GM12878 (cell line): ENCODE measurements at regions of chr21 and their contacts with region 1.

Region 1: GRCh38 chr21:46458315-46459023 is at the start of gene DIP2A:
- DNase-seq: peak; percentile 85
- ATAC-seq: peak; percentile 97
- H3K4me3 ChIP-seq: peak within 1 kb of the TSS; percentile 87
- H3K27ac ChIP-seq: peak within 1 kb of the TSS; percentile 95
- H3K4me1 ChIP-seq: no peaks in the 10 kb centered on the region
- H3K27me3 ChIP-seq: no peaks in the 10 kb centered on the region
- CTCF ChIP-seq: peak in 2 of 3 experiments; percentile 9; a peak in 1 of 6 replicates
- EP300 ChIP-seq: no peak
- POLR2A ChIP-seq: peak; percentile 96
- RAD21 ChIP-seq: no peak
- polyA plus RNA-seq, gene DIP2A: 1.7 to 3.4 TPM

Region 2: GRCh38 chr21:46442938-46443337 is 15.5 kb before region 1 on chr21:
- CTCF ChIA-PET with region 1: no interaction called
- POLR2A ChIA-PET with region 1: no interaction called
- RAD21 ChIA-PET with region 1: no interaction called
- SMC1A ChIA-PET with region 1: no interaction called
- in situ Hi-C with region 1: no loop called
- intact Hi-C with region 1: no loop called
- DNase-seq: no peak
- ATAC-seq: no peak
- H3K4me3 ChIP-seq: no peak overlapping the region
- H3K27ac ChIP-seq: no peak overlapping the region
- H3K4me1 ChIP-seq: no peaks in the 10 kb centered on the region
- H3K27me3 ChIP-seq: no peaks in the 10 kb centered on the region
- CTCF ChIP-seq: no peak
- EP300 ChIP-seq: no peak
- POLR2A ChIP-seq: no peak
- RAD21 ChIP-seq: no peak

Region 3: GRCh38 chr21:46472246-46472645 is 13.8 kb after region 1 on chr21:
- CTCF ChIA-PET with region 1: interaction called, 4 read pairs
- POLR2A ChIA-PET with region 1: interaction called, 3 read pairs
- RAD21 ChIA-PET with region 1: no interaction called
- SMC1A ChIA-PET with region 1: interaction called, 16 read pairs
- in situ Hi-C with region 1: no loop called
- intact Hi-C with region 1: no loop called
- DNase-seq: no peak
- ATAC-seq: no peak
- H3K4me3 ChIP-seq: no peak overlapping the region
- H3K27ac ChIP-seq: no peak overlapping the region
- H3K4me1 ChIP-seq: no peaks in the 10 kb centered on the region; the same call in none of the 2 replicates
- H3K27me3 ChIP-seq: no peaks in the 10 kb centered on the region
- CTCF ChIP-seq: no peak
- EP300 ChIP-seq: no peak
- POLR2A ChIP-seq: no peak
- RAD21 ChIP-seq: no peak

Region 4: GRCh38 chr21:46509741-46510502 is 51.5 kb after region 1 on chr21:
- CTCF ChIA-PET with region 1: interaction called, 4 read pairs
- POLR2A ChIA-PET with region 1: interaction called, 5 read pairs
- RAD21 ChIA-PET with region 1: interaction called, 5 read pairs
- SMC1A ChIA-PET with region 1: interaction called, 4 read pairs
- in situ Hi-C with region 1: loop called (anchors 5 kb)
- intact Hi-C with region 1: loop called (anchors 2 kb)
- DNase-seq: no peak
- ATAC-seq: no peak
- H3K4me3 ChIP-seq: no peak overlapping the region
- H3K27ac ChIP-seq: no peak overlapping the region
- H3K4me1 ChIP-seq: peaks cover 17% of the 10 kb centered on the region
- H3K27me3 ChIP-seq: no peaks in the 10 kb centered on the region
- CTCF ChIP-seq: no peak
- EP300 ChIP-seq: no peak
- POLR2A ChIP-seq: no peak
- RAD21 ChIP-seq: no peak